GM23248 (cell line): ENCODE measurements at regions of chr5 and their contacts with region 1.

Region 1: GRCh38 chr5:141691867-141692532 is 10.0 kb upstream of the ARAP3 start:
- DNase-seq: peak; percentile 85
- H3K4me3 ChIP-seq: peak overlapping the region; percentile 72
- H3K27ac ChIP-seq: no peak overlapping the region
- H3K4me1 ChIP-seq: peaks cover 14% of the 10 kb centered on the region
- H3K27me3 ChIP-seq: peaks cover 8% of the 10 kb centered on the region; the same call in 1 of the 2 replicates

Region 2: DNA sequence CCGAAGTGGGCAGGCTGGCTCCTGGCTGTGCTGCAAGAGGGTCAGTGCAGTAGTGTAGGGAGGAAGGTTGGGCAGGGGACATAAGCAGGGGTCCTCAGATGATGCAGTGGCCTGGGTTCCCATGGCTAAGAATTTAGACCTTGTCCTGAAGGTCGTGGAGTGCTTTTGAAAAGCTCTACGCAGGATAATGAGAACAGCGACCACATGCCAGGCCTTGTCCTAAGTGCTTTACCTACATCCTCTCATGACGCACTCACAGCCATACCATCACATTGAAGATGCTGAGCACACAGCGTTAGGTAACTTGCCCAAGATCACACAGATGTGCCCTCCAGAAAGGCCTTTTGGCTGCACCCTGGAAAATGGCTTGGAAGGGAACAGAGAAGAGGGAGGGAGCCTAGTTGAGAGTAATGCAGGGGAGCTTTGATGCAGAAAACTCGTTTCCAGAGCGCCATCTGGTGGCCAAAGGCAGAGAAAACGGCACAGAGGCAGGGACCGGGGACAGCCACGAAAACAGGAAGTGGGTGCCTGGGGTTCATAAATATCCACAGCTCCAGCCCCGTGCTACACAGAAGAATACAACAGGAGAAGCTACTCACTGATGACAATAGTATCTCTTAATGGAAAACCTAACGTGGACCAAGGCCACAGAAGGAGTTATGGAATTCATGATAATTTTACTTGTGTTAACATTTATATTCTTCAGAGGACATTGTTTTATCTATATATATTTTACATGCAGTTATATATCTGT is 268.6 kb after region 1 on chr5:
- in situ Hi-C with region 1: loop called (anchors 5 kb)
- DNase-seq: peak; percentile 85
- H3K4me3 ChIP-seq: no peak overlapping the region
- H3K27ac ChIP-seq: no peak overlapping the region
- H3K4me1 ChIP-seq: peaks cover 3% of the 10 kb centered on the region; the same call in 1 of the 2 replicates
- H3K27me3 ChIP-seq: no peaks in the 10 kb centered on the region

Region 3: DNA sequence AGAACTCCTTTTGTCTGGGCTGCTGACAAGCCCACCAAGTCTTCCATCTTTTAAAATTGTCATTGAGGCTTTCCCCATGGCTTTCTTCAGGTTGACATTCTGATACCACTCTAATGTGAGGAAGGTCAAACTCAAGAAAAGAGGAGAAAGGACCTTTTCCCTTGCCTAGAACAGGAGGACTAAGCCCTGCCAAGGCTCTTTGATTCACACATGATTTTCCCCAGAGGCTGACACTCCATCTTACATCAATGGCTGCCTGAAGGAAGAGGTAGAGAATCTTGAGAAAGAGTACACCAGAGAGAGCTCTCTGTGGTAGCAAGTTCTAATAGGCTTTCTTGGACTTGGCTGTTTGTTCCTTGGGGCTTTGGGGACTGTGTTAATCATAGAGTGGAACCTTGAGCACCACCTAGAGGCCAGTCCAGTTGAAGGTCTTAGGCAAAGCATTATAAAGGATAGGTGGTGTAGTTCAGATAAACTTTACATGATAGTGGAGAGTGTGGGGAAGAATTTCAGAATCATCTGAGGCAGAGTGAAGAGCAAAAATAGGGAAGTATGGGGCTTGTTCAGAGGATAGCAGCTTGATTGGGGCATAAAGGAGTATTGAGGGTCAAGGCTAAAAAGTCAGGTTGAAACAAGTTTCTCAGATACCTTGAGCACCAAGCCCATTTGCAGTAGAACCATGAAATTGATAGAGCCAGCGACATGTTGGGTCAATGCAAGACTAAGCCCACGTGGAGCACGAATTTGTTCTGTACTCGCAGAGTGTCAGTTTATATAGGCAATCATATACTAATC is 453.3 kb after region 1 on chr5:
- in situ Hi-C with region 1: loop called (anchors 25 kb)
- DNase-seq: peak; percentile 80
- H3K4me3 ChIP-seq: no peak overlapping the region
- H3K27ac ChIP-seq: no peak overlapping the region
- H3K4me1 ChIP-seq: no peaks in the 10 kb centered on the region
- H3K27me3 ChIP-seq: no peaks in the 10 kb centered on the region